Heart left ventricle (tissue), 16 donors: ENCODE measurements at regions of chr3 and their contacts with region 1.

Region 1: DNA sequence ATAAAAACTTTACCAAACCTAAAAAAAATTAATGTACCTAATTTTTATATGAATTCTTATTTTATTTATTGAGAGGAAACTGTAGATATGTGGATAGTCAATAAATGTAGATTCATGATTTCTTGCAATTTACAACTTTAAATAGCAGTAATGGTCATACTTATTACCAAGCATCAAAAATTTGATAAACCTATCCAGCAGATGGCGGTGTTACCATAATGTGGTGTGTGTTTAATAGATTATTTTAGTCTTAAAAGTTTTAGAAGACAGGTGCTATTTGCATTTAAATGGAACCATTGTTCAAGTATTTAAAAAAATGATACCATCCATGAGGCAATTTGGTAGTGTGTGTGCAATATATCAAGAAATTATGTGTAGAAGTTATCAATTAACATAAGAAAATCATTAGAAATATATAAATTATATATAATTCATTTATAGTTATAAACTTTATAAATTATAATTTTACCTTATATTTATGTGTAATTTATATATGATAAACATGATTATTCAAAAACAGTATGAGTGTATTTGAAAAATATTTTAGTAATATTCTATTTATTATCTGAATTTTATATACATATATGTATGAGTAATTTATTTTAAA is 176.0 kb upstream of the BCHE start:
- DNase-seq: no peak
- ATAC-seq: no peak
- H3K4me3 ChIP-seq: no peak overlapping the region
- H3K27ac ChIP-seq: no peak overlapping the region
- H3K4me1 ChIP-seq: no peaks in the 10 kb centered on the region
- H3K27me3 ChIP-seq: no peaks in the 10 kb centered on the region
- CTCF ChIP-seq: peak in 7 of 12 donors; percentile 18 to 46 (median 39)
- POLR2A ChIP-seq: no peak

Region 2: GRCh38 chr3:165903901-165904630 is 109.1 kb before region 1 on chr3:
- intact Hi-C with region 1: no loop called
- DNase-seq: no peak
- ATAC-seq: no peak
- H3K4me3 ChIP-seq: no peak overlapping the region
- H3K27ac ChIP-seq: no peak overlapping the region
- H3K4me1 ChIP-seq: no peaks in the 10 kb centered on the region
- H3K27me3 ChIP-seq: no peaks in the 10 kb centered on the region
- CTCF ChIP-seq: no peak
- POLR2A ChIP-seq: no peak

Region 3: GRCh38 chr3:167151636-167152035 is 1138.5 kb after region 1 on chr3:
- intact Hi-C with region 1: loop called in 1 of 10 experiments (anchors 5 kb)
- DNase-seq: no peak
- ATAC-seq: no peak
- H3K4me3 ChIP-seq: no peak overlapping the region
- H3K27ac ChIP-seq: no peak overlapping the region
- H3K4me1 ChIP-seq: peaks cover 0 to 4% (median 0%) of the 10 kb centered on the region in 12 donors
- H3K27me3 ChIP-seq: no peaks in the 10 kb centered on the region
- CTCF ChIP-seq: peak in 7 of 12 donors; percentile 7 to 39 (median 33)
- POLR2A ChIP-seq: no peak